Calu3 (cell line): ENCODE measurements at regions of chr19 and their contacts with region 1.

Region 1: GRCh38 chr19:45681391-45682015 is 10.2 kb downstream of the SNRPD2 start:
- DNase-seq: peak; percentile 96
- H3K4me3 Mint-ChIP-seq: peak overlapping the region; percentile 73
- H3K27ac Mint-ChIP-seq: peak overlapping the region; percentile 11
- H3K4me1 Mint-ChIP-seq: peaks cover 8% of the 10 kb centered on the region
- H3K27me3 Mint-ChIP-seq: no peaks in the 10 kb centered on the region
- CTCF ChIP-seq: peak; percentile 99

Region 2: DNA sequence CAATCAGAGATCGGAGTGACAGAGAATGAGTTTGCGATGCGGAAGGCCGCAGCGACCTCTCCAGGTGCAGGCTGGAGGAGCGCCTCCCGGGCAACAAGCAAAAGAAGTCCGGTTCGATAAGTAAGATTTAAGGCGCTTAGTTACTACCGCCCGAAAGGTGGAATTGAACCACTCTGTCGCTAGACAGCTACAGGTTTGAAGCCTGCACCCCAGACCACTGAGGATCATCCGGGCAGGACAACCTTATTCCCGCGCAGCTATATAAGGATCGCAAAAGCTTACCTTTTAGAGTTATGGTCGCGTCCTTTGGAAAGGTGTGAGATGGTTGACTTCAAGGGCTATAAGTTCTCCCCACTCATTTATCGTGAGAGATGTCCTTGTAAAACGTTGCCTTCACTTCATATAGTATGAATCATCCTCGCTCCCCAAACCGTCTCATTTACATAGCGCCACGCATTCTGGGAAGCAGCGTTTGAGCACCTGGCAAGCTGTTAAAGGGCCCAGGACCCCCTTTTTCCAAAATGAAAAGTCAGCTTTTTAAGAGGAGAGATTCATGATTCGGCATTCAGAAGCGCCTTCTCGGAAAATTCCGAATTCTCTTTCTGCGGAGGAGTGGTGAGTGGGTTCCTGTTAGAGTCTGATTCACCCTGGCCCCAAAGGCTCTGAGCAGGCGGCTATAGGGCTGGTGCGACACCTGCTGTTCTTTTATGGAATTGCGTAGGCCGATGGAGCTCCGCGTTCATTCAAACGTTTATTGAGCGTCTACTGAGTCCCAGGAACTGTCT is 202.9 kb before region 1 on chr19:
- CTCF ChIA-PET with region 1: interaction called, 10 read pairs
- intact Hi-C with region 1: no loop called
- DNase-seq: peak; percentile 92
- H3K4me3 Mint-ChIP-seq: peak overlapping the region; percentile 52
- H3K27ac Mint-ChIP-seq: peak overlapping the region; percentile 98
- H3K4me1 Mint-ChIP-seq: peaks cover 31% of the 10 kb centered on the region
- H3K27me3 Mint-ChIP-seq: no peaks in the 10 kb centered on the region
- CTCF ChIP-seq: peak; percentile 99

Region 3: GRCh38 chr19:45584332-45585157 is 97.0 kb before region 1 on chr19 and contains the start of gene OPA3:
- CTCF ChIA-PET with region 1: no interaction called
- intact Hi-C with region 1: no loop called
- DNase-seq: peak; percentile 99
- H3K4me3 Mint-ChIP-seq: peak within 1 kb of the TSS; percentile 94
- H3K27ac Mint-ChIP-seq: peak within 1 kb of the TSS; percentile 99
- H3K4me1 Mint-ChIP-seq: peaks cover 21% of the 10 kb centered on the region
- H3K27me3 Mint-ChIP-seq: no peaks in the 10 kb centered on the region
- CTCF ChIP-seq: no peak
- total RNA-seq, gene OPA3: 14.2 and 17.1 TPM in 2 replicates

Region 4: GRCh38 chr19:45623984-45624383 is 57.5 kb before region 1 on chr19:
- CTCF ChIA-PET with region 1: no interaction called
- intact Hi-C with region 1: no loop called
- DNase-seq: no peak
- H3K4me3 Mint-ChIP-seq: no peak overlapping the region
- H3K27ac Mint-ChIP-seq: no peak overlapping the region
- H3K4me1 Mint-ChIP-seq: no peaks in the 10 kb centered on the region
- H3K27me3 Mint-ChIP-seq: no peaks in the 10 kb centered on the region
- CTCF ChIP-seq: no peak

Region 5: DNA sequence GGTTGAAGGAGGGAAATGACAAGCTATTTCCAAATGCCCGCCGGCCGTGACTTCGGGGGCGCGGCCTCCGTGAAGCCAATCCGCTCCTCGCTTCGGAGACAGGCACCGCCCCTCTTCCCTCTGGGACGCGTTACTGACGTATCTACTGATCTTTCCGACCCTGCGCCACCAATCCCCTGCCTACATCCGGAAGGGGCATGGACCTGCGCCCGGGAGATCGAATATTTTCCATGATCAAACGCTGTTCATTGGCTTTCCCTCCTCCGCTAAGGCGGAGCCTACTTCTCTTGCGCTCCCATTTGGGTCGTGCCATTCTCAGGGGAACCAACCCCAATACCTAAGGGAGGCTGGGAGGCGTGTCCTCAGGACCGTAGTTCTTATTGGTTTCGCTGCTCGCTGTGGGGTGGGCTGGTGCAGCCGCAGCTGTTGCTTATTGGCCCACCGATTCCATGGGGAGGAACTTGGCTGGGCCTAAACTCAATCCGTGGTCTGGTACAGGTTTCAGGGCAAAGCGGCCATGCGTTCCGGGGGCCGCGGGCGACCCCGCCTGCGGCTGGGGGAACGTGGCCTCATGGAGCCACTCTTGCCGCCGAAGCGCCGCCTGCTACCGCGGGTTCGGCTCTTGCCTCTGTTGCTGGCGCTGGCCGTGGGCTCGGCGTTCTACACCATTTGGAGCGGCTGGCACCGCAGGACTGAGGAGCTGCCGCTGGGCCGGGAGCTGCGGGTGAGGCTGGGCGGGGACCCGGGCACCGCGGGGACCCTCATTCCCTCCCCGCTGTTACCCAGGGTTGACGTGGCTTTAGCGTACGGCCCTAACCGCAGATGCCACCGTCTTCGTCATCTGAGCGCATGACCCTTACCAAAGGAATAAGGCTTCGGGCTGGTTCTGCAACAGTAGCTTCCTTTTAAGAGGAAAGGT is 10.9 kb after region 1 on chr19 and contains the start of gene QPCTL:
- CTCF ChIA-PET with region 1: interaction called, 43 read pairs
- intact Hi-C with region 1: no loop called
- DNase-seq: peak; percentile 99
- H3K4me3 Mint-ChIP-seq: peak within 1 kb of the TSS; percentile 82
- H3K27ac Mint-ChIP-seq: peak within 1 kb of the TSS; percentile 90
- H3K4me1 Mint-ChIP-seq: peaks cover 3% of the 10 kb centered on the region
- H3K27me3 Mint-ChIP-seq: no peaks in the 10 kb centered on the region
- CTCF ChIP-seq: no peak
- total RNA-seq, gene QPCTL: 20.4 and 20.7 TPM in 2 replicates